ENCODE measurements at regions of chr2 and their contacts with region 1.

Region 1: DNA sequence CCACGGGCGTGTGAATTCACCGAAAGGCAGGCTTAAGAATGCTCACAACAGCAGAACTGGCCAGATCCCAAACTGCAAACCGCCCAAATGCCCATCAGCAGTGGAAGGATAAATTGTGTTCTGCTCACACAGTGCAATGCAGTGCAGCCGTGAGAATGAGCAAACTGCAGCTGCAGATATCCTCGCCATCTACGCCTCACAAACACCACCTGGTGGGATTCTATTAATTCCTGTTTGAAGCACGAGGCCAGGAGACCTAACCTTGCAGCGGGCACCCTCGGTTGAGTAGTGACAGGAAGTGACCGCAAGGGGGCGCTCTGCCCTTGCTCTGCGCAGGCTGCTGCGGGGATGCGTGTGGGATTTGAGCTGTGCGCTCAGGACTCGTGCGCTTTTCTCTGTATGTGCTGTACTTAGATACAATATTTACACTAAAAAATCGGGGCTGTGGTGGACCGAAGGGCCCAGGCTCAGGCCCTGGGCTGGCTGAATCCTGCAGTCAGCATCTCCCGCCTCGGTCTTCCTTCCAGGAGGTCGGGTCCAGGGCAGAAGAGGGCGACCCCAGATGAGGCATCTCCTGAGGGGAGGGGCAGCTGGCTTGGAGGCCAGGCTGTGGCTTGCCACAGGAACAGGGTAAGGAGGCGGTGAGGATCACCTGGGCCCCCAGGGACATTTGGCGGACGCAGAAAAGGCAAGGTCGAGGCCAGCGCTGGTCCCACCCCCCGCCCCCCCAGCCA is 19.8 kb upstream of the PDIA6 start:
- DNase-seq: peak; percentile 83
- H3K4me3 ChIP-seq: no peak overlapping the region
- H3K27ac ChIP-seq: no peak overlapping the region
- H3K4me1 ChIP-seq: peaks cover 0 to 15% (median 7%) of the 10 kb centered on the region in 4 donors
- H3K27me3 ChIP-seq: peaks cover 10% of the 10 kb centered on the region
- CTCF ChIP-seq: peak; percentile 93 to 98 (median 96)
- EP300 ChIP-seq: no peak
- POLR2A ChIP-seq: no peak

Region 2: DNA sequence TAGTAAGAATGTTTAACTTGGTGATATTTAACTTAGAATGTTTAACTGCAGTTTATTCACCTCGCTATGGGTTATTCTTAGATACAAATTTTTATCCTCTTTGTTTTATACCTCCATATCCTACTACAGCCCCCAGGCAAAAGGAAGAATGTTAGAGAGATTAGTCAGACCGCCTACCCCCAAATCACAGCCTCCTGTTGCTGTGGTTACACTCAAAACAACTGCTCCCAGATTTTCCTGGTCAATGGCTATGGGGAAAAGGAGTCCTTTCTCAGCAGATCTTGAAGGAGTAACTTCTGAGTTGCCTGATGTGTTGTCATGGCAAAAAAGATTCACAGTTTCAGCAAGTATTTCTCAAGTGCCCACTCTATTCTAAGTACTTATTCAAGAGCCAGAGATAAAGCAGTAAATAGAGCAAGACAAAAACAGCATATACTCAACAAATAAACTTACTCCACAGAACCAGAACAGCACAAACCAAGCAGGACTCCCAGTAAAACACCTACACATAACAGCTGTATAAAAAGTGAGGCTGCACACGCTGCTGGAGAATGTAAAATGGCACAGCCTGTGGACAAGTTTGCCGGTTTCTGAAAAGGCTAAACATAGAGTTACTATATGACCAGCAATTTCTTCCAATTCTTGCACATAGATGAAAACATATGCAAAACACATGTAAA is 247.4 kb before region 1 on chr2:
- in situ Hi-C with region 1: no loop called
- intact Hi-C with region 1: no loop called
- DNase-seq: no peak
- H3K4me3 ChIP-seq: no peak overlapping the region
- H3K27ac ChIP-seq: no peak overlapping the region
- H3K4me1 ChIP-seq: peaks cover 0 to 14% (median 6%) of the 10 kb centered on the region in 4 donors
- H3K27me3 ChIP-seq: no peaks in the 10 kb centered on the region
- CTCF ChIP-seq: no peak
- EP300 ChIP-seq: no peak
- POLR2A ChIP-seq: no peak

Region 3: DNA sequence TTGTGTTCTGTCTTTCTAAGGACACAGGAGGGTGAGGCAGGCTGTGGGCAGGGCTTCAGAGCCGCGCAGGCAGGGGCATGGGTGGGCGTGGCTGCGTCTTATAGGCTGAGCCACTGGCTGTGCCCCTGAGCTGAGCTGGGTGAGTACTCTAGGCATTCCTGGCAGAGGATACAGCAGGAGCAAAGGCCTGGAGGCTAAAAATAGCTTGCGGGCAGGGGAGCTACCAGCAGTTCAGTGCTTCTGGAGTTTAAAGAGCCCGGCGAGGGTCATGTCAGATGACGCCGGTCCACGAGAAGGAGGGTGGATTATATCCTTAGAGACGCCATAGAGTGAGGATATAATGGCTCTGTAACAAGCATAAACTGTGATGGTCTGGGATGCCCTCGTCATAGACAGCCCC is 11.7 kb after region 1 on chr2:
- in situ Hi-C with region 1: no loop called
- intact Hi-C with region 1: no loop called
- DNase-seq: peak; percentile 89
- H3K4me3 ChIP-seq: no peak overlapping the region
- H3K27ac ChIP-seq: peak overlapping the region; percentile 56 to 72 (median 68)
- H3K4me1 ChIP-seq: peaks cover 0 to 12% (median 5%) of the 10 kb centered on the region in 4 donors
- H3K27me3 ChIP-seq: no peaks in the 10 kb centered on the region
- CTCF ChIP-seq: no peak
- EP300 ChIP-seq: no peak
- POLR2A ChIP-seq: peak; percentile 15

Region 4: GRCh38 chr2:10911261-10912075 is 79.1 kb after region 1 on chr2 and contains the start of gene KCNF1:
- in situ Hi-C with region 1: loop called in 1 of 4 experiments (anchors 10 kb)
- intact Hi-C with region 1: loop called (anchors 10 kb)
- DNase-seq: no peak
- H3K4me3 ChIP-seq: peak within 1 kb of the TSS in 3 of 4 donors; percentile 10 to 48 (median 37)
- H3K27ac ChIP-seq: no peak within 1 kb of the TSS
- H3K4me1 ChIP-seq: peaks cover 0 to 10% (median 7%) of the 10 kb centered on the region in 4 donors
- H3K27me3 ChIP-seq: peaks cover 45% of the 10 kb centered on the region
- CTCF ChIP-seq: peak in 3 of 5 experiments; percentile 11 to 26 (median 24)
- EP300 ChIP-seq: no peak
- POLR2A ChIP-seq: no peak
- total RNA-seq, gene KCNF1: 0.27 TPM in 1 of 4 donors, not detected in the others

Region 5: GRCh38 chr2:11446733-11447248 is 614.4 kb after region 1 on chr2:
- in situ Hi-C with region 1: loop called in 2 of 4 experiments (anchors 25 kb)
- intact Hi-C with region 1: no loop called
- DNase-seq: peak; percentile 48
- H3K4me3 ChIP-seq: no peak overlapping the region
- H3K27ac ChIP-seq: no peak overlapping the region
- H3K4me1 ChIP-seq: no peaks in the 10 kb centered on the region
- H3K27me3 ChIP-seq: no peaks in the 10 kb centered on the region
- CTCF ChIP-seq: peak; percentile 76 to 84 (median 80)
- EP300 ChIP-seq: no peak
- POLR2A ChIP-seq: no peak